H1 (cell line): ENCODE measurements at regions of chr1 and their contacts with region 1.

Region 1: GRCh38 chr1:171226747-171227370 is 21.4 kb upstream of the FMO1 start:
- DNase-seq: no peak
- H3K4me3 ChIP-seq: no peak overlapping the region
- H3K27ac ChIP-seq: no peak overlapping the region
- H3K4me1 ChIP-seq: peaks cover 2 to 6% (median 6%) of the 10 kb centered on the region in 4 experiments; a peak in 5 of 7 replicates
- H3K27me3 ChIP-seq: no peaks in the 10 kb centered on the region
- CTCF ChIP-seq: peak in 2 of 3 experiments; percentile 85 to 93; a peak in 3 of 4 replicates
- EP300 ChIP-seq: no peak
- POLR2A ChIP-seq: no peak
- RAD21 ChIP-seq: peak; percentile 99

Region 2: DNA sequence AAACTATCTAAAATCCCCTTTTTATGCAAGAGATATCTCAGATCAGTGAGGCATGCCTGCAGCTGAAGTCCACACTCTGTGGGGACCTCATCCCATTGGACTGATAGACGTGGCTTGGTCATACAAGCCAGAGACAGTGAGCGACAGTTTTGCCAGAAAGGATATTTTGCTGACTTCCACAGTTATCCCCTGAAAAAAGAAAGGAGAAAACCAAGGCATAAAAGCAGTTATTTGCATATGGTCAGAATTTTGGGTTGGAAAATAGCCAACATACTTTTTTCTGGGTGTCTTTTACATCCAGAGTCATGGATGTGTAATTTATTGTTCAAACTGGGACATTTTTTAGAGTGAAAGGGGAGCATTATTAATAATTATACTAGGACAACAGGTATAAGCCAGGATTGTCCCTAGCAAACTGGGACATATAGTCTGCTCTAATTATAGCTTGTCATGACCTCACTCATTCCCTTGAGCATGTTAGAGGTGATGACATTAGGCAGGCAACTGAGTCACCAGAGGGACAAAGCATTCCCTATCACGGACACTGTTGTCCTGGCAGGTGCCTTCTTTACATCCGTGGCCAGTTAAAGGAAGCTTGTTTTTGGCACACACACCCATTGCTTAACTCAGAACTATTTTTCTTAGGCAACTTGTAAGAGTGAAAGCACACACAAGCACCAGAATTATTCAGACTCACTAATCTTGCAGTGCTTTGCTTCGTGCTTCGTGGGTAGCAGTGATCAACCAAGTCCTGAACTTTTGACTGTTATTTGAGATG is 497.4 kb before region 1 on chr1:
- CTCF ChIA-PET with region 1: no interaction called
- POLR2A ChIA-PET with region 1: no interaction called
- DNase-seq: no peak
- H3K4me3 ChIP-seq: no peak overlapping the region
- H3K27ac ChIP-seq: no peak overlapping the region
- H3K4me1 ChIP-seq: no peaks in the 10 kb centered on the region
- H3K27me3 ChIP-seq: no peaks in the 10 kb centered on the region
- CTCF ChIP-seq: no peak
- EP300 ChIP-seq: no peak
- POLR2A ChIP-seq: no peak
- RAD21 ChIP-seq: no peak

Region 3: DNA sequence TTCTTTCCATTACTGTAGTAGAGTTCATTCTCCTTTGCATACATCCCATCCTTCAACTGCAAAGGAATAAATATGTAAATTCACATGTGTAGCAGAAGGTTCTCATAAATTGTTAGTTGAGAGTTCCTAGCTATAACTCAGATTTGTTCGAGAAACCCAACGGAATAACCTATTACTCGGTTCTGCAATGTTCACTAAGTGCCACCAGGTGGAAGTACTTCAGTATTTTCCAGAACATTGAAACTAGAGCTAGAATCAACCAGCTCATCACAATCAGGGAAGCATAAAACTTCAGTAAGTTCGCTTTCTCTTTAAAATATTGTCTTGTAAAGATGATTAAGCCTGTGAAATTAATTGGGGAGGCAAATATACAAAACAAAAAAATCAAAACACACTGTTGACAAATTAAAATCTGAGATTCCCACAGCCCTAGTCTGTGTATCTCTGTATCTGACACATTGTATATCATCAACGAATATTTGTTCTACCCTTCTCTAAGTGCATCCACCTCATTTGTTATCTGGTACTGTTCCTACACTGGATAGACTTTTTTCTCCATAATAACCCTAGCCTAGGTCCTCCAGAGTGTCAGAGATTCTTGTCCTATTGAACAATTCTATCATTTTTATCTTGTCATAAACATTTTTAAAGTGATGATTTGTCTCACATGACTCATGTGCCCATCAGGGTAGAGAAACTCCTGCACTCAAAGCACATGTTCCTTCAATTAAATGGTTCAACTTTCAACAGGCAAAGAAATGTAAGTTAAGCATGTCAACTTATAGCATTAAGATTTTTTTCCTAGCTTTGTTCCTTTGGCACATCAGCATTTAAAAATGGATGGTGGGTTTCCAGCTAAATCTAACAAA is 259.6 kb before region 1 on chr1:
- CTCF ChIA-PET with region 1: interaction called, 112 read pairs
- POLR2A ChIA-PET with region 1: no interaction called
- DNase-seq: no peak
- H3K4me3 ChIP-seq: no peak overlapping the region
- H3K27ac ChIP-seq: no peak overlapping the region
- H3K4me1 ChIP-seq: no peaks in the 10 kb centered on the region
- H3K27me3 ChIP-seq: no peaks in the 10 kb centered on the region
- CTCF ChIP-seq: peak in 2 of 3 experiments; percentile 57 to 62; a peak in 3 of 4 replicates
- EP300 ChIP-seq: no peak
- POLR2A ChIP-seq: no peak
- RAD21 ChIP-seq: peak; percentile 78 to 81

Region 4: GRCh38 chr1:171090604-171091003 is 136.3 kb before region 1 on chr1 and contains the start of gene FMO3:
- CTCF ChIA-PET with region 1: interaction called, 14 read pairs
- POLR2A ChIA-PET with region 1: no interaction called
- DNase-seq: no peak
- H3K4me3 ChIP-seq: no peak within 1 kb of the TSS
- H3K27ac ChIP-seq: no peak within 1 kb of the TSS
- H3K4me1 ChIP-seq: no peaks in the 10 kb centered on the region
- H3K27me3 ChIP-seq: no peaks in the 10 kb centered on the region
- CTCF ChIP-seq: no peak
- EP300 ChIP-seq: no peak
- POLR2A ChIP-seq: no peak
- RAD21 ChIP-seq: no peak
- total RNA-seq, gene FMO3: not detected in 2 replicates

Region 5: DNA sequence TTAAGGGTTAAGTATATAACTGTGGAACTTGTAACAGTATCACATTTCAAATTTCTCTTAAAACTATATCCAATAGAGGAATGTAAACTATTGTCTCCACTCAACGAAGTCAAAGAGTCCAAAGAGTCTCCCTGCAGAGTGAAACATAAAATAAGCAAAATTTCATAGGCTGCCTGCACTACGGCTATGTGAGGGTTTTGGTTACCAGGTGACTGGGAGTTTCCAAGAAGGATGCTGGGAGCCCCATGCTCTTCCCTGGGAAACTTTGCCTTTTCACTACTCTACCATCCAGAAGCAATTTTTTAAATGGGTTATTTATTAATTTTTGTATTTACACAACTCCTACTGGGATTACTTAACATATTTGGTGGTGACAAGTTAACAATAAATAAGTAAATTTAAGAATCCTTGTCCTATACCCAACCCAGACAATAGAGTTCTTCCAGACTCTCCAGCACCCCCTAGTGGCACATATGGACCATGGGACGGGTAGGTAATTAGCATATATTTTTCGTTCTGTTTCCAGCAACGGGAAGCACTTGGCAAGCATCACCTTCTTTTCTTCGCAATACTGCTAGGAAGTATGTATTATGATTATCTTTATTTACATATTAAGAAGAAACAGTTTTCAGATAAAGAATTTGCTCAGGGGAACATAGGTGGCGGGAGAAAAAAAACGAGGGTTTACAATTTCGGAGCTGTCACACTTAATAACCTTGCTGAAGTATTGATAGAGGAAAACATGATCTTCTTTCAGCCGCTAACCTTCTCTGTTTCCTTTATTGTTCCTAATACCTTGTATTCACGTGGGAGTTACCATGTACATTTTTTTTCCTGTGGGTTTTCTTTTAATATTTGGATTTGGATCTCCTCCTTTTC is 38.2 kb before region 1 on chr1:
- CTCF ChIA-PET with region 1: interaction called, 25 read pairs
- POLR2A ChIA-PET with region 1: interaction called, 3 read pairs
- DNase-seq: peak in 1 of 2 experiments; percentile 63
- H3K4me3 ChIP-seq: no peak overlapping the region
- H3K27ac ChIP-seq: no peak overlapping the region
- H3K4me1 ChIP-seq: no peaks in the 10 kb centered on the region; a peak in 1 of 7 replicates
- H3K27me3 ChIP-seq: no peaks in the 10 kb centered on the region
- CTCF ChIP-seq: peak; percentile 31 to 80 (median 74)
- EP300 ChIP-seq: no peak
- POLR2A ChIP-seq: no peak
- RAD21 ChIP-seq: peak; percentile 69 to 75

Region 6: GRCh38 chr1:171210355-171210754 is 16.5 kb before region 1 on chr1:
- CTCF ChIA-PET with region 1: interaction called, 17 read pairs
- POLR2A ChIA-PET with region 1: interaction called, 4 read pairs
- DNase-seq: no peak
- H3K4me3 ChIP-seq: no peak overlapping the region; a peak in 1 of 8 replicates
- H3K27ac ChIP-seq: no peak overlapping the region
- H3K4me1 ChIP-seq: peaks cover 0 to 14% (median 6%) of the 10 kb centered on the region in 4 experiments; a peak in 3 of 7 replicates
- H3K27me3 ChIP-seq: no peaks in the 10 kb centered on the region
- CTCF ChIP-seq: no peak
- EP300 ChIP-seq: no peak
- POLR2A ChIP-seq: no peak
- RAD21 ChIP-seq: no peak

Region 7: DNA sequence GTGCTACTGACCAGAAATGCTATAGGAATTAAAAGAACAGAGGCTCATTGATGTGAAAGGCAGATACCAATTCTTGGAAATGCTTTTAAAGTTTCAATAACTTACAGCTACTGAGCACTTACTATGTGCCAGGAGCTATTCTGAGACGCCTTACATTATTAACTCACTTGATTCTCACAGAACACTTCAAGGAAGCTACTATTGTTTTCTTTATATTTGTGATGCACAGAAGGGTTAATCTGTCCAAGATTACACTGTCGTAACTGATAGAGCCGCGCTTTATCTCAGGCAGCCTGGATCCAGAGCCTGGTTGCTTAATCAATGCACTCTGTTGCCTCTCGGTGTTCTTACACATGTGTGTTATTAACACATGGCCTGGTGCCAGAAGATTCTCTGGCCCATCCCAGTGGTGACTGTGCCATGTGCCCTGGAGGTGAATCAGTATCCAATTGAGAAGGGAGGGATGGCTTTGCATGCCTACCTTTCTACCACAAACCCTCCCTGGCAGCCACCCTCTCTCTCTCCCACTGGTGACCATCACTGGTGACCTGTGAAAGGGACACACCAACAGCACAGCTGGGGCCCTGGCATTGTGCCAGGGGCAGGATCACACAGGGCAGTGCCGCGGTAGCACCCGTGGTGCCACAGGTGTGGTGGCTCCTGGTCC is 30.2 kb after region 1 on chr1:
- CTCF ChIA-PET with region 1: interaction called, 20 read pairs
- POLR2A ChIA-PET with region 1: no interaction called
- DNase-seq: no peak
- H3K4me3 ChIP-seq: no peak overlapping the region
- H3K27ac ChIP-seq: no peak overlapping the region
- H3K4me1 ChIP-seq: peaks cover 9 to 20% (median 17%) of the 10 kb centered on the region in 4 experiments
- H3K27me3 ChIP-seq: no peaks in the 10 kb centered on the region
- CTCF ChIP-seq: no peak
- EP300 ChIP-seq: no peak
- POLR2A ChIP-seq: no peak
- RAD21 ChIP-seq: no peak

Region 8: DNA sequence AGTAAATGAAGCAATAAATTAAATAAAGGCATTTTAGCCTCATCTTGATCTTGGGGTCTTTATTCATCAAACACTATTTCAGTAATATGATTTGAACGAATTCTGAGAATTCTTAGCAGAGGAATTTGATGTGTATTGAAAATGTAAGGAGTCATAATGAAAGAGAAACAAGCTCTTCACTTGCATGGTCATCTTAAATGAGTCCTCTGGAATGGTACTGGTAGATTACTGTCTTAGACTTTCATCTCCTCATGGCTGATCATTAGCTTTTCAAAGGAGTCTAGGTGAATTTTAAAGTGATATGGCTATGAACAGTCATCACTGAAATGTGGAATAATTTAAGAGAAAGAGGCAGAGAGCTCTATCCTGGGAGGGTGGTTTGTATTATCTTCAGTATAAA is 288.4 kb after region 1 on chr1:
- CTCF ChIA-PET with region 1: no interaction called
- POLR2A ChIA-PET with region 1: no interaction called
- DNase-seq: no peak
- H3K4me3 ChIP-seq: no peak overlapping the region
- H3K27ac ChIP-seq: no peak overlapping the region
- H3K4me1 ChIP-seq: no peaks in the 10 kb centered on the region
- H3K27me3 ChIP-seq: no peaks in the 10 kb centered on the region
- CTCF ChIP-seq: no peak
- EP300 ChIP-seq: no peak
- POLR2A ChIP-seq: no peak
- RAD21 ChIP-seq: no peak